ENCODE measurements at regions of chr18 and their contacts with region 1.

Region 1: GRCh38 chr18:55100817-55101457 is 141.7 kb upstream of the CCDC68 start:
- DNase-seq: peak; percentile 36
- H3K4me3 Mint-ChIP-seq: peak overlapping the region; percentile 53
- H3K27ac Mint-ChIP-seq: peak overlapping the region; percentile 86
- H3K4me1 Mint-ChIP-seq: peaks cover 60% of the 10 kb centered on the region
- H3K27me3 Mint-ChIP-seq: no peaks in the 10 kb centered on the region
- CTCF ChIP-seq: no peak

Region 2: DNA sequence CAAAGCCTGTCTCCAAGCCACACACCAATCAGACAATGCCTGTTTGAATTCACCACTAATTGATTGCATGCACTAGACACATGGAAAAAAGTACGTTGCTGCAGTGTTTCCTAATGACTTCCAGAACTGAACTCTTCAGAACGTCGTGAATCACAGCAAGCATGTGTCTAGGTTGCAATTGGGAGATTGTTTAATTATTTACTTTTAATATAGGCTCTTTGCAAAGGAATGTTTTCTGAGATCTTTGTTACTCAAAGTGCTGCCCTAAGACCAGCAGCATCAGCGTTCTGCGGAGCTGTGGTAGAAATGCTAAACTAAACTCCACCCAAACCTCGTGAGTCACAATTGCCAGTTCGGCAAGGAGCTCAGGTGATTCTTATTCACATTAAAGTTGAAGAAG is 88.9 kb before region 1 on chr18:
- CTCF ChIA-PET with region 1: interaction called, 4 read pairs
- intact Hi-C with region 1: loop called (anchors 2 kb)
- DNase-seq: peak; percentile 64
- H3K4me3 Mint-ChIP-seq: peak overlapping the region; percentile 8
- H3K27ac Mint-ChIP-seq: peak overlapping the region; percentile 83
- H3K4me1 Mint-ChIP-seq: peaks cover 45% of the 10 kb centered on the region
- H3K27me3 Mint-ChIP-seq: no peaks in the 10 kb centered on the region
- CTCF ChIP-seq: no peak

Region 3: DNA sequence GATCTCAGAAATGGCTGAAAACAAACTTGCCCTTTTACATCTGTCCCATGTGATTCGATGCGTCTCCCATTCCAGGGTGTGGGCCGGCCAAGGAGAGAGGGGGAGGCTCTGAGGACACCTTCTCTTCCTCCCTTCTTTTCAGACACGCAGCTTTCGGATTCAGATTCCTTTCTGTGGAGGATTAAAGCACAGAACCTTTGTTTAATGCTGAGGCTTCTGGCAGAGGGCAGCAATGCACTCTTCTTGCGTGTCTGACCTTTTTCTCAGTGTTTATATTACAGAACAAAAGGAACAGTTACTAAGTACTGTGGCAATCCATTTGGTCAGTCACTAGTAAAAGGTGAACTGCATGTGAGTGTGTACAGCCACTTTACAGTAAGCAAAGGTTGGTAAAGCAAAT is 127.3 kb after region 1 on chr18:
- CTCF ChIA-PET with region 1: interaction called, 3 read pairs
- intact Hi-C with region 1: loop called (anchors 2 kb)
- DNase-seq: peak; percentile 4
- H3K4me3 Mint-ChIP-seq: no peak overlapping the region
- H3K27ac Mint-ChIP-seq: peak overlapping the region; percentile 13
- H3K4me1 Mint-ChIP-seq: peaks cover 10% of the 10 kb centered on the region
- H3K27me3 Mint-ChIP-seq: no peaks in the 10 kb centered on the region
- CTCF ChIP-seq: no peak